ENCODE measurements at regions of chrX and their contacts with region 1.

Region 1: GRCh38 chrX:69216911-69217310 is 51.7 kb upstream of the PJA1 start:
- DNase-seq: no peak
- H3K4me3 ChIP-seq: no peak overlapping the region
- H3K27ac ChIP-seq: no peak overlapping the region
- H3K4me1 ChIP-seq: no peaks in the 10 kb centered on the region
- CTCF ChIP-seq: no peak

Region 2: GRCh38 chrX:69133921-69134542 is 82.9 kb before region 1 on chrX:
- CTCF ChIA-PET with region 1: no interaction called
- POLR2A ChIA-PET with region 1: no interaction called
- intact Hi-C with region 1: loop called (anchors 10 kb)
- DNase-seq: peak; percentile 25
- H3K4me3 ChIP-seq: no peak overlapping the region
- H3K27ac ChIP-seq: no peak overlapping the region
- H3K4me1 ChIP-seq: no peaks in the 10 kb centered on the region
- CTCF ChIP-seq: peak; percentile 67

Region 3: DNA sequence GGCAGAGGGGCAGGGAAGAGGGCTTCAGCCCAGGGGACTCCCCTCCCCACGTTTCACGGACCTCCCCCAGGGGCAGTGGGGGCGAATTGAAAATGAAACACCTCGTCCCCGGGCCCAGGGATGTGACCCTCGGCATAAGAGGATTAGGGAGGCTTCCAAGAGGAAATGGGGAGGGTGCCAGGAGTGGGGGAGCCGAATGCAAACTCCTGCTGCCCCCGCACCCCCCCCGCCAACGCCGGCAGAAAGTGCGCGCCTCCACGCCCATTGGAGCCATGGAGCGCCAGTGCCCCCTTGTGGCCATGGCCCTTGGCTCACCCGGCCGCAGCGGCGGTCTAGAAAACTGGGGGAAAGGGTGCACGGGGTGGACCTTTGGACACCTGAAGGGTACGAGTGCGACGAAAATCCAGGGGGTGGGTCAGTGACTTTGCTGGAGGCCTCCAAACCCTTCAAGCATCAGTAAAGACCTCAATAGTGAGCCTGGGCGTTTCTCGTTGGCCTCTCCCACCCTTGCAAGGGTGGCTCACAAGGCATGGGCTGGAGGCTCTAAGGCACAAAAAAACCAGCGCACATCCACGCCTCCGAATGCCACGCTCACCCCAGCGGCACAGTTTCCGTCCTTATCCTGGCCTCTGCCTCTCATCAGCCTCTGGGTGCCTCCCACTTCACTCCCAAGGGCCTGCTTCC is 69.1 kb after region 1 on chrX:
- CTCF ChIA-PET with region 1: no interaction called
- POLR2A ChIA-PET with region 1: no interaction called
- intact Hi-C with region 1: no loop called
- DNase-seq: peak; percentile 49
- H3K4me3 ChIP-seq: peak overlapping the region; percentile 38
- H3K27ac ChIP-seq: no peak overlapping the region
- H3K4me1 ChIP-seq: no peaks in the 10 kb centered on the region
- CTCF ChIP-seq: peak; percentile 71

Measured in OCI-LY7 (cell line).